ENCODE measurements at regions of chr14 and their contacts with region 1.

Region 1: GRCh38 chr14:20343092-20343861 is at the start of gene PARP2:
- DNase-seq: peak; percentile 82 to 100 (median 91)
- ATAC-seq: peak; percentile 82 to 85
- H3K4me3 Mint-ChIP-seq: peak within 1 kb of the TSS; percentile 88 to 100 (median 98)
- H3K27ac Mint-ChIP-seq: peak within 1 kb of the TSS; percentile 96 to 99 (median 98)
- H3K4me1 Mint-ChIP-seq: peaks cover 11 to 25% (median 17%) of the 10 kb centered on the region in 4 donors
- H3K27me3 Mint-ChIP-seq: peaks cover 0 to 4% (median 0%) of the 10 kb centered on the region in 5 donors
- polyA plus RNA-seq, gene PARP2: 8.8 to 13.6 (median 9.6) TPM

Region 2: GRCh38 chr14:20327005-20327869 is 16.0 kb before region 1 on chr14:
- POLR2A ChIA-PET with region 1: interaction called, 23 read pairs
- DNase-seq: peak in 7 of 10 donors; percentile 8 to 75 (median 46)
- ATAC-seq: peak; percentile 57 to 60
- H3K4me3 Mint-ChIP-seq: peak overlapping the region in 4 of 10 donors; percentile 4 to 15 (median 7)
- H3K27ac Mint-ChIP-seq: peak overlapping the region in 9 of 10 donors; percentile 0 to 91 (median 78)
- H3K4me1 Mint-ChIP-seq: peaks cover 7 to 29% (median 25%) of the 10 kb centered on the region in 4 donors
- H3K27me3 Mint-ChIP-seq: no peaks in the 10 kb centered on the region

Region 3: GRCh38 chr14:20454516-20455354 is 111.5 kb after region 1 on chr14 and contains the starts of genes APEX1 and OSGEP:
- POLR2A ChIA-PET with region 1: interaction called, 38 read pairs
- DNase-seq: peak; percentile 87 to 99 (median 98)
- ATAC-seq: peak; percentile 82 to 83
- H3K4me3 Mint-ChIP-seq: peak within 1 kb of the TSS in 4 of 10 donors; percentile 4 to 30 (median 12)
- H3K27ac Mint-ChIP-seq: peak within 1 kb of the TSS in 2 of 10 donors; percentile 9 to 59
- H3K4me1 Mint-ChIP-seq: peaks cover 15 to 34% (median 26%) of the 10 kb centered on the region in 4 donors
- H3K27me3 Mint-ChIP-seq: no peaks in the 10 kb centered on the region
- polyA plus RNA-seq, gene APEX1: 125 to 176 (median 148) TPM
- polyA plus RNA-seq, gene OSGEP: 38.8 to 43.3 (median 42.0) TPM

Region 4: DNA sequence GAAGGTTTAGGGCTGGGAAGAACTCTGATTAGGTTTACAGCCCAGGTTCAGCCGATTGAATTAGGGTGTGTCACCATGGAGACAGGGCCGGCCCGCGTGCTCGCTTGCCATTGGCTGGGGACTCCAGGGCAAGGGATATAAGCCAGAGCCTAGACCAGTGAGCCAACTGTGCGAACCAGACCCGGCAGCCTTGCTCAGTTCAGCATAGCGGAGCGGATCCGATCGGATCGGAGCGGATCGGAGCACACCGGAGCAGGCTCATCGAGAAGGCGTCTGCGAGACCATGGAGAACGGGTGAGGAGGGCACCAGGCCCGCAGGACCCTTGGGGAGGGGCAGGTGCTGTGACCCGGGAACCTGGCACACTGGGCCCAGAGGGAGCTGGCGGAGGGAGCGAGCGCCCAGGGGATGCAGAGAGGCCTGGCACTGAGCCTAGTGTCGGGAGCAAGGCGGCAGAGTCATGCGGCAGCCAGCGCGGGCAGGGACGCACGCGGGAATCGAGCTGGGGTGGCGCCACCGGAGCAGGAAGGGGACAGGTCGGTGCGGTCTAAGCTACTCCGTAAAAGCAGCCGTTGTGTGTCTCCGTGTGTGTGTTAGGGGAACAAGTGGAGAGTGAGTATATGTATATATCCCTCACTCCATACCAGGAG is 126.1 kb after region 1 on chr14 and contains the start of gene PNP:
- POLR2A ChIA-PET with region 1: interaction called, 11 read pairs
- DNase-seq: peak; percentile 72 to 94 (median 85)
- ATAC-seq: peak; percentile 91 to 93
- H3K4me3 Mint-ChIP-seq: peak within 1 kb of the TSS; percentile 96 to 100 (median 100)
- H3K27ac Mint-ChIP-seq: peak within 1 kb of the TSS; percentile 89 to 100 (median 98)
- H3K4me1 Mint-ChIP-seq: peaks cover 32 to 52% (median 48%) of the 10 kb centered on the region in 4 donors
- H3K27me3 Mint-ChIP-seq: no peaks in the 10 kb centered on the region
- polyA plus RNA-seq, gene PNP: 32.2 to 57.9 (median 40.6) TPM

Region 5: DNA sequence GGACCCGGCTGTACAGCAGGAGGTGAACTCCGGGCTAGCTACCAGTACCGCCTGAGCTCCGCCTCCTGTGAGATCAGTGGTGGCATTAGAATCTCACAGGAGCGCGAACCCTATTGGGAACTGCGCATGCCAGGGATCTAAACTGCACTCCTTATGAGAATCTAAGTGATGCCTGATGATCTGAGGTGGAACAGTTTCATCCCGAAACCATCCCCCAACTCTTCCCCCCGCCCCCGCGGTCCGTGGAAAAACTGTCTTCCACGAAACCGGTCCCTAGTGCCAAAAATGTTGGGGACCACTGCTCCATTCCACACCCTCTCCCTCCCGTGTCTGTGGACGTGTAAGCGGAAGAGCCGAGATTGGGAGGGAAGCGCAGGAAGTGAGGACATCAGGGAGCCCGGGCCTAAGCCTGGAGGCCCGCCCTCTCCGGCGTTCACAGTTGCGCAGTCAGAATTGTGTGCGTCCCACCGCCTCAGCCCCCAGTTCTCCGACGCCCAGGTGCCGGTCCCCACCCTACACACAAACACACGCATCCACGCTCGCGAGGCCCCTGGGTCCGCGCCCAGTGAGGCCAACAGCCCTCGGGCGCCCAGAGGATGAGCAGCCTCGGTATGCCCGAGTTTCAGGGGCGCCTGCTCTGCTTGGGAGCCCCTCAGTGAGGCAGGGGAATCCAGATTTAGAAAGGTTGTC is 339.3 kb after region 1 on chr14:
- POLR2A ChIA-PET with region 1: interaction called, 74 read pairs
- DNase-seq: peak; percentile 71 to 91 (median 80)
- ATAC-seq: peak; percentile 61 to 70
- H3K4me3 Mint-ChIP-seq: no peak overlapping the region
- H3K27ac Mint-ChIP-seq: no peak overlapping the region
- H3K4me1 Mint-ChIP-seq: peaks cover 8 to 33% (median 15%) of the 10 kb centered on the region in 4 donors
- H3K27me3 Mint-ChIP-seq: peaks cover 0 to 5% (median 0%) of the 10 kb centered on the region in 5 donors